ENCODE measurements at regions of chr3 and their contacts with region 1.

Region 1: GRCh38 chr3:51682079-51682478 is 11.0 kb downstream of the TEX264 start:
- DNase-seq: peak; percentile 81 to 85 (median 83)
- H3K4me3 ChIP-seq: peak overlapping the region; percentile 26 to 50
- H3K4me3 Mint-ChIP-seq: peak overlapping the region; percentile 74 to 91 (median 82)
- H3K27ac ChIP-seq: peak overlapping the region; percentile 48
- H3K27ac Mint-ChIP-seq: peak overlapping the region; percentile 57 to 97 (median 91)
- H3K4me1 ChIP-seq: peaks cover 100% of the 10 kb centered on the region
- H3K4me1 Mint-ChIP-seq: peaks cover 71 to 98% (median 90%) of the 10 kb centered on the region in 4 donors
- H3K27me3 ChIP-seq: no peaks in the 10 kb centered on the region
- H3K27me3 Mint-ChIP-seq: no peaks in the 10 kb centered on the region

Region 2: DNA sequence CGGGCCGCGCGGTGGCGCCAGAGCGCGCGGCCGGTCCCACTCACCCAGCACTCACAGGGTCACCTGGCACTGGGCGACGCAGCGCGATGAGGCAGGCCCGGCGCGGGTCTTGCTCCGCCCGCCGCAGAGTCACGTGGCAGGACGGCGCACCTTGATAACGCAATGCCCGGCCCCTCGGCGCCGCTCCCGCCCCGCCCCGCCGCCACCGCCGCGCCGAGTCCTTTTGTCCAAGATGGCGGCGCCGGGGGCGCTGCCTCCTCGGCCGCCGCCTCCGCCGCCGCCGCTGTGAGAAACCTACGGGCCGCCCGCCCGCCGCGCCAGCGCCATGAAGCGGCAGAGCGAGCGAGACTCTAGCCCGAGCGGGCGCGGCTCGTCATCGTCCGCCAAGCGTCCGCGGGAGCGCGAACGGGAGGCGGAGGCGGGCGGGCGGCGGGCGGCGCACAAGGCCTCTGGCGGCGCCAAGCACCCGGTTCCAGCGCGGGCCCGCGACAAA is 291.0 kb before region 1 on chr3 and contains the start of gene RBM15B:
- CTCF ChIA-PET with region 1: interaction called, 24 read pairs
- POLR2A ChIA-PET with region 1: interaction called, 16 read pairs
- intact Hi-C with region 1: loop called (anchors 1 kb)
- DNase-seq: peak; percentile 96 to 98 (median 97)
- H3K4me3 ChIP-seq: peak within 1 kb of the TSS; percentile 57
- H3K4me3 Mint-ChIP-seq: peak within 1 kb of the TSS; percentile 76 to 91 (median 83)
- H3K27ac ChIP-seq: peak within 1 kb of the TSS; percentile 79
- H3K27ac Mint-ChIP-seq: peak within 1 kb of the TSS; percentile 89 to 97 (median 95)
- H3K4me1 ChIP-seq: peaks cover 69% of the 10 kb centered on the region
- H3K4me1 Mint-ChIP-seq: peaks cover 33 to 81% (median 61%) of the 10 kb centered on the region in 4 donors
- H3K27me3 ChIP-seq: no peaks in the 10 kb centered on the region
- H3K27me3 Mint-ChIP-seq: no peaks in the 10 kb centered on the region
- total RNA-seq, gene RBM15B: 38.3 to 39.9 TPM

Region 3: DNA sequence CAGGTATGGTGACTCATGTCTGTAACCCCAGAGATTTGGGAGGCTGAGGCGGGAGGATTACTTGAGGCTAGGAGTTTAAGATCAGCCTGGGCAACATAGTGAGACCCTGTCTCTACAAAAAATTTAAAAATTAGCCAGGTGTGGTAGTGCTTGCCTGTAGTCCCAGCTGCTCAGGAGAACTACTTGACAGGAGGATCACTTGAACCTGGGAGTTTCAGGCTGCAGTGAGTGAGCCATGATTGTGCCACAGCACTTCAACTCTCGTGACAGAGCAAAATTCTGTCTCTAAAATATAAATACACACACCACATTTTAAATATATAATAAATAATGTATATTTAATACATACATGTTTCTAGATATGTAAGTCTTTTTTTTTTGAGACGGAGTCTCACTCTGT is 64.5 kb before region 1 on chr3:
- CTCF ChIA-PET with region 1: no interaction called
- POLR2A ChIA-PET with region 1: no interaction called
- intact Hi-C with region 1: loop called (anchors 2 kb)
- DNase-seq: no peak
- H3K4me3 ChIP-seq: no peak overlapping the region
- H3K4me3 Mint-ChIP-seq: no peak overlapping the region
- H3K27ac ChIP-seq: no peak overlapping the region
- H3K27ac Mint-ChIP-seq: peak overlapping the region in 2 of 7 donors; percentile 28 to 64
- H3K4me1 ChIP-seq: no peaks in the 10 kb centered on the region
- H3K4me1 Mint-ChIP-seq: peaks cover 9 to 28% (median 25%) of the 10 kb centered on the region in 4 donors
- H3K27me3 ChIP-seq: no peaks in the 10 kb centered on the region
- H3K27me3 Mint-ChIP-seq: no peaks in the 10 kb centered on the region

Region 4: GRCh38 chr3:51646091-51646490 is 36.0 kb before region 1 on chr3:
- CTCF ChIA-PET with region 1: interaction called, 62 read pairs
- POLR2A ChIA-PET with region 1: interaction called, 10 read pairs
- intact Hi-C with region 1: loop called (anchors 1 kb)
- DNase-seq: no peak
- H3K4me3 ChIP-seq: no peak overlapping the region
- H3K4me3 Mint-ChIP-seq: no peak overlapping the region
- H3K27ac ChIP-seq: no peak overlapping the region
- H3K27ac Mint-ChIP-seq: no peak overlapping the region
- H3K4me1 ChIP-seq: no peaks in the 10 kb centered on the region
- H3K4me1 Mint-ChIP-seq: peaks cover 0 to 2% (median 0%) of the 10 kb centered on the region in 4 donors
- H3K27me3 ChIP-seq: no peaks in the 10 kb centered on the region
- H3K27me3 Mint-ChIP-seq: no peaks in the 10 kb centered on the region

Region 5: GRCh38 chr3:51696954-51697353 is 14.9 kb after region 1 on chr3:
- CTCF ChIA-PET with region 1: interaction called, 21 read pairs
- POLR2A ChIA-PET with region 1: interaction called, 12 read pairs
- intact Hi-C with region 1: no loop called
- DNase-seq: no peak
- H3K4me3 ChIP-seq: no peak overlapping the region
- H3K4me3 Mint-ChIP-seq: no peak overlapping the region
- H3K27ac ChIP-seq: no peak overlapping the region
- H3K27ac Mint-ChIP-seq: peak overlapping the region in 1 of 7 donors; percentile 46
- H3K4me1 ChIP-seq: peaks cover 24% of the 10 kb centered on the region
- H3K4me1 Mint-ChIP-seq: peaks cover 13 to 61% (median 26%) of the 10 kb centered on the region in 4 donors
- H3K27me3 ChIP-seq: no peaks in the 10 kb centered on the region
- H3K27me3 Mint-ChIP-seq: no peaks in the 10 kb centered on the region

Region 6: DNA sequence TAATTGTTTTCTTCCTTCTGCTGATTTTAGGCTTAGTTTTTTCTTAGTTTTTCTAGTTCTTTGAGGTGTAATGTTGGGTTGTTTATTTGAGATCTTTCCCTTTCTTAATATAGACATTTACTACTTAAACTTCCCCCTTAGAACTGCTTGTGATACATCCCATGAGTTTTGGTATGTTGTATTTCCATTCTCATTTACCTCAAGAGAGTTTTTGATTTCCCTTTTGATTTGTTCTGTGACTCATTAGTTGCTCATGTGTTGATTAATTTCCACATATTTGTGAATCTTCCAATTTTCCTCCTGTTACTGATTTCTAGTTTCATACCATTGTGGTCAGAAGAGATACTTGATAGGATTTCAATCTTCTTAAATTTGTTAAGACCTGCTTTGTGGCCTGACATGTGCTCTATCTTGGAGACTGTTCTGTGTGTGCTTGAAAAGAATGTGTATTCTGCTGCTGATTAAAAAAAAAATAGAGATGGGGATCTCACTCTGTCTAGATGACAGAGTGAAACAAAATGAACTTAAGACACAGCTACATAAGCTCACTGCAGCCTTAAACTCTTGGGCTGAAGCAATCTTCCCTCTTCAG is 47.1 kb after region 1 on chr3:
- CTCF ChIA-PET with region 1: no interaction called
- POLR2A ChIA-PET with region 1: no interaction called
- intact Hi-C with region 1: no loop called
- DNase-seq: no peak
- H3K4me3 ChIP-seq: no peak overlapping the region
- H3K4me3 Mint-ChIP-seq: no peak overlapping the region
- H3K27ac ChIP-seq: no peak overlapping the region
- H3K27ac Mint-ChIP-seq: no peak overlapping the region
- H3K4me1 ChIP-seq: no peaks in the 10 kb centered on the region
- H3K4me1 Mint-ChIP-seq: peaks cover under 1 to 4% (median 2%) of the 10 kb centered on the region in 4 donors
- H3K27me3 ChIP-seq: no peaks in the 10 kb centered on the region
- H3K27me3 Mint-ChIP-seq: peaks cover under 1 to 2% of the 10 kb centered on the region in 2 donors

Measured in CD4-positive, alpha-beta memory T cell (primary cell).